PC-9 (cell line): ENCODE measurements at regions of chr9 and their contacts with region 1.

Region 1: DNA sequence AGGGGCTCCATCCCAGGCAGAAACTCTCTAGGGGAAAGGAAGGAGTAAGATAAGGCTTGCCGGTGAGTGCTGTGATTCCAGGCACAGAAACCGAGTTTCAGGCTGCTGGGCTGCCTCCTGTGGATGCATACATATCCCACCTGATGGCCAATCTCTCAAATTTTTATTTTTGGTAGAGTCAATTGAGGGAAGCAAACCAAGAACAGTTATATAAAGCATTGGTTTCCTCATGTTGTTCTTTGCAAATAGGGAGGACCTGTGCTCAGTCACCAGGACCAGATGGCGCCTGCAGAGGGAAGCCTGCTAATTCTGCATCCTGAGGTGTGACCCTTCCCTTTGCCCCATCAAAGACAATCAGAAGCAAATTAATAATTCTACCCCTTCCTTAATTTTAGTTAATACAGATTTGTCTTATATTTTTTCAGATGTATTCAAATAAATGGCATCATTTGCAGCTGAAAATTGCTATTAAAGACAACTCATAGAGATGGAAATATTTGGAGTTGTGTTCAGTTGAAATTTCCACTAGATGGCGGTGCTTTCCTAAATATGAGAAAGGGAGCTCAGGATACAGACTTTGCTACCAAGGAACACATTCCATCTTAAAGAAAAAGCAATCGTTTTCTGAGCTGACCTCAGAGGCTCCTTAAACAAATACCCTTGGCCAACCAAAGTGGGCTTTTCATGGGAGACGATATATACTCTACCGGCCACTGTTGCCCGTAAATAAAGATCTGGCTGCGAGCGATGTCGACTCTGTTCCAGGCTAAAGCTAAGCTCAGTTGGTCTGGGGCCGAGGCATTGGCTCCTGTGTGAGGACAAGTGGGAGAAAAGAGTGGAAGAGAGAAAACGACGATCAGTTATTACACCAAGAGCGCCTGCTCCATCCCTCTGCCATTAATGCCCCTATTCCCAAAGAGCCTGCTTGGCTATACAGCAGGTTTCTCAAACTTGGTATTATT is 225.7 kb upstream of the KLF9 start:
- DNase-seq: peak in 1 of 2 experiments; percentile 8
- H3K4me3 ChIP-seq: no peak overlapping the region
- H3K27ac ChIP-seq: no peak overlapping the region
- H3K4me1 ChIP-seq: no peaks in the 10 kb centered on the region
- H3K27me3 ChIP-seq: peaks cover 5% of the 10 kb centered on the region; the same call in 1 of the 2 replicates
- CTCF ChIP-seq: peak; percentile 77

Region 2: DNA sequence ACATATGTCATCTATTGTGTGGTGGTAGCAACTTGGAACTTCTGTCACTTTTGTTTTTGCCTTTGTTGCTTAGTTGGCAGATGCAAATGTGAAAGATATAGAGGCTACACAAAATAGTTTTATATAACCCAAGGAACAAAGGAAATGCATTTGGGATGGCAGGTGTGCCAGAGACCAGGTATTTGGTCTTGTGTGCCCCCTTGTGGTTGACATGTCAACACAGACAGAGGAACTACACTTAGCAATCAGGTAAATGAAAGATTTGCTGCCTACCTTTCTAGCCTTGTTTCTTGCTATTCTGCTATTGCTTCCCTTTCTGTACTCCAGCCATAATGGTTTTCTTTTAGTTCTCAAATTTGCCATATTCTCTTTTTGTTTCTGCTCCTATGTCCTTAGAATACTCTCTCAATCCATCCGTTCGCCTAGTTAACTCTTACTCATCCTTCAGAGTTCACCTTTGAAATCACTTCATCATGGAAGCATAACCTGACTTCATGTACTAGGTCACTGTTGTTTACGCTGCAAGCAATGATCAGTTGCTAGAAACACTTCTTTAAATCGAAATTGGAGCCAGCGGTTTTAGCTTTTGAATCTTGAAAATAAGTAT is 361.7 kb after region 1 on chr9:
- CTCF ChIA-PET with region 1: interaction called, 3 read pairs
- POLR2A ChIA-PET with region 1: no interaction called
- intact Hi-C with region 1: loop called (anchors 1 kb)
- DNase-seq: peak in 1 of 2 experiments; percentile 44
- H3K4me3 ChIP-seq: no peak overlapping the region
- H3K27ac ChIP-seq: no peak overlapping the region
- H3K4me1 ChIP-seq: no peaks in the 10 kb centered on the region
- H3K27me3 ChIP-seq: no peaks in the 10 kb centered on the region
- CTCF ChIP-seq: peak; percentile 77

Region 3: DNA sequence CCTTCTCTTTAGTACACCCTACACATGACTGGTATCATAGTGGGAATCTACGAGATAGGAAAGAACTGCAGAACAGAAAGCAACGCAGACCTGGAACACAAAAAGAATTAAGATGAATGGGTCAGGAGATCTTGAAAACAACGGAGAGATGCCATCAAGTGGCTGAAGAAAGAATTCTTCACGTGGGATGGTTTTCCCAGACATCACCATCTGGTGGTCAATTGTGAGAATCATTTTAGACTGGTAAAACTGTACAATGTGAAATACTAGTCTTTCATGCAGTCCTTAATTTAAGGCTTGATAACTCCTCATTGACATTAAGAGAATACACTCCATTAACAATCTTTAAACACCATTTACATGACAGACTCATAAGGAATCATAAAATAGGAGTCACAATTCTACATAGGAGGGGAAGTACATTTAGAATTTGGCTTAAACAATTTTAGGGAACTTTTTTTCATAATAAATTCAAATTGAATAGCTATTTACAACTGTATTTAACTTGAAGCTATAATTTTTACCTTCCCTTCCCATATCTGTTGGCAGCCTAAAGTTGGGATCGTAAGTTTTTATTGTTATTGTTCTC is 609.7 kb after region 1 on chr9:
- CTCF ChIA-PET with region 1: interaction called, 4 read pairs
- POLR2A ChIA-PET with region 1: no interaction called
- intact Hi-C with region 1: loop called (anchors 1 kb)
- DNase-seq: peak; percentile 17 to 42
- H3K4me3 ChIP-seq: no peak overlapping the region
- H3K27ac ChIP-seq: no peak overlapping the region
- H3K4me1 ChIP-seq: no peaks in the 10 kb centered on the region
- H3K27me3 ChIP-seq: no peaks in the 10 kb centered on the region
- CTCF ChIP-seq: peak; percentile 72